A673 (cell line): ENCODE measurements at regions of chr1 and their contacts with region 1.

Region 1: GRCh38 chr1:116878804-116879477 is 30.8 kb upstream of the PTGFRN start:
- DNase-seq: peak; percentile 74
- H3K4me3 ChIP-seq: peak overlapping the region; percentile 32
- H3K27ac ChIP-seq: peak overlapping the region; percentile 45
- H3K4me1 ChIP-seq: peaks cover 28% of the 10 kb centered on the region
- H3K27me3 ChIP-seq: no peaks in the 10 kb centered on the region
- CTCF ChIP-seq: no peak

Region 2: GRCh38 chr1:117045644-117046043 is 166.7 kb after region 1 on chr1:
- CTCF ChIA-PET with region 1: no interaction called
- POLR2A ChIA-PET with region 1: no interaction called
- intact Hi-C with region 1: loop called (anchors 10 kb)
- DNase-seq: no peak
- H3K4me3 ChIP-seq: no peak overlapping the region
- H3K27ac ChIP-seq: no peak overlapping the region
- H3K4me1 ChIP-seq: no peaks in the 10 kb centered on the region
- H3K27me3 ChIP-seq: no peaks in the 10 kb centered on the region
- CTCF ChIP-seq: no peak

Region 3: GRCh38 chr1:117231748-117232373 is 352.9 kb after region 1 on chr1:
- CTCF ChIA-PET with region 1: no interaction called
- POLR2A ChIA-PET with region 1: no interaction called
- intact Hi-C with region 1: no loop called
- DNase-seq: no peak
- H3K4me3 ChIP-seq: no peak overlapping the region
- H3K27ac ChIP-seq: no peak overlapping the region
- H3K4me1 ChIP-seq: no peaks in the 10 kb centered on the region
- H3K27me3 ChIP-seq: no peaks in the 10 kb centered on the region
- CTCF ChIP-seq: no peak